Right ventricle myocardium inferior (tissue), 1 donor: ENCODE measurements at regions of chr12 and their contacts with region 1.

Region 1: GRCh38 chr12:113221181-113221997 is at the start of gene TPCN1:
- DNase-seq: peak; percentile 100
- ATAC-seq: peak; percentile 96
- total RNA-seq, gene TPCN1: 120 TPM

Region 2: GRCh38 chr12:113247123-113248055 is 26.0 kb after region 1 on chr12:
- intact Hi-C with region 1: loop called (anchors 2 kb)
- DNase-seq: no peak
- ATAC-seq: no peak

Region 3: DNA sequence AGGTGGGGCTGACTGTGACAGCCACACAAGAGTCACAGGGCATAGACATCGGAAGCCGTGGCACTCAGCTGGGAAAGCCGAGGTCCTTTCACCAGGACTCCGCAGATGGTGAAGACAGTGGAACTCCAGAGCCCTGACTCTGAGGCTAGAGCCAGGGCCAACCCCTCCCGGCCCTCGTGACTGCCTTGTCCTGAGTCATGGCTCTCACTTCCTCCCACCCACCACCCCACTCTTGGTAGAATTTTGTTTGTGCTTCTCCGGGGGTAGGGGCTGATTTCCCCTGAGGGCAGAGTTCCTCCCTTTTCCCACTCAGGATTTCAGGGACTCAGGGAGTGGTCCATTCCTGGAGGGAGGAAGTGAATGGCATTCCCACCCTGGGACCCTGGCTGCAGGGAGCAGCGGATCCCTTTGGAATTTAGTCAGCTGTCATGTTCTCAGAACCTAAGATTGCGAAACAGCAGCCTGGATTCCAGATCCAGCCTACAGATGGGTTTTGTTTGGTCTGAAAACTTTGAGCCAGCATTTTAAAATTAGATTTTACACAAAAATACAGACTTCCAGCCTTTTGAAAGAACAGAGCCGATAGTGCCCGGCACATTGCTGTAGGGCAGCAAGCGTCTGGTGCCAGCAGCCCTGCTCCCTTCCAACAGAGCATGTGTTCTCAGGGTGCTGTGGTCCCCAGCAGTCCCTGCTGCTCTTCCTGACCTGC is 50.6 kb after region 1 on chr12:
- intact Hi-C with region 1: loop called (anchors 5 kb)
- DNase-seq: peak; percentile 87
- ATAC-seq: peak; percentile 92